CD4-positive, alpha-beta T cell (primary cell): ENCODE measurements at regions of chr10 and their contacts with region 1.

Region 1: DNA sequence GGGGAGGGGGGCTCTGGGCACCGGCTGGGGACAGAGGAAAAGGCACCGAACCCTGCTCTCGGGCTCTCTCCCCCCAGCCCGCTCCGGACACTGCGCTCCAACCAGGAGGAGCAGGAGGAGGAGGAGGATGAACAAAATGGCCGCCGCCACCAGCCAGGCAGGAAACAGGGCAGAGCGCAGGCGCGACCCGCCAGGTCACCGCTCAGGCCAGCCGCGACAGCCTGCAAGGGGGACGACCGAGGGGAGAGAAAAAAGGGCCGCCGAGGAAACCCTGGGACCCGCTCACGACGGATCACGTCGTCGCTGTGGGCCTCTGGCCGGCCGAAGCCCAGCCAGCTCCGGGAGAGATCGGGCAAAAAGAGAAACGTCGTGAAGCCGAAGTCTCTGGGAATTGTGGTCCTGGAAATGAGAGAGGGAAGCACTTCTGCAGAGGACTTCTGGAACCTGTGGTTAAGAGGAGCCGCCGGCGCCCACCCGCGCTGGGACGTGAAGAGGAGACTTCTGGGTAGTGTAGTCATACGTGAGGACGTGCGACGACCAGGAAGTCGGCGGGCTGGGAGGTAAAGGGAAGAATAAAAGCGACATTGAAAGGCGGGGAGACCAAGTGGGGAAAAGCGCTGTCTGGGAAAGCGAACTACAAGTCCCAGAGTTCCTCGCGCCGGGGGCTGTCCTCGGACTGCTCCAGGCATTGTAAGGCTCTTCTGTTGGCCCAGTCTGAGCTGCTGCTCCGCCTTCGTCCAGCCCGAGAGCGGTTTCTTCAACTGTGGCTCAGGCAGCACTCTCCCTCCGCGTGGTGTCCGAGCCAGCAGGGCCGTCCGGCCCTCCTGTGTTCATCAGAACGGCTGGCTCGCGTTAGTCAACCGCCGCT is at the start of gene TIAL1:
- DNase-seq: peak; percentile 82 to 97 (median 90)
- ATAC-seq: peak; percentile 82
- H3K4me3 ChIP-seq: peak within 1 kb of the TSS; percentile 70
- H3K4me3 Mint-ChIP-seq: peak within 1 kb of the TSS; percentile 98
- H3K27ac ChIP-seq: peak within 1 kb of the TSS; percentile 87 to 96
- H3K27ac Mint-ChIP-seq: peak within 1 kb of the TSS; percentile 95
- H3K4me1 ChIP-seq: peaks cover 22% of the 10 kb centered on the region
- H3K4me1 Mint-ChIP-seq: peaks cover 60% of the 10 kb centered on the region
- H3K27me3 ChIP-seq: no peaks in the 10 kb centered on the region
- H3K27me3 Mint-ChIP-seq: no peaks in the 10 kb centered on the region
- CTCF ChIP-seq: no peak
- total RNA-seq, gene TIAL1: 159 to 174 TPM

Region 2: GRCh38 chr10:119080521-119081260 is 516.1 kb before region 1 on chr10 and contains the start of gene EIF3A:
- CTCF ChIA-PET with region 1: no interaction called
- POLR2A ChIA-PET with region 1: no interaction called
- intact Hi-C with region 1: loop called (anchors 5 to 10 kb)
- DNase-seq: peak; percentile 82 to 96 (median 88)
- ATAC-seq: peak; percentile 69
- H3K4me3 ChIP-seq: peak within 1 kb of the TSS; percentile 99
- H3K4me3 Mint-ChIP-seq: peak within 1 kb of the TSS; percentile 100
- H3K27ac ChIP-seq: peak within 1 kb of the TSS; percentile 92 to 96
- H3K27ac Mint-ChIP-seq: peak within 1 kb of the TSS; percentile 99
- H3K4me1 ChIP-seq: peaks cover 33% of the 10 kb centered on the region
- H3K4me1 Mint-ChIP-seq: peaks cover 64% of the 10 kb centered on the region
- H3K27me3 ChIP-seq: no peaks in the 10 kb centered on the region
- H3K27me3 Mint-ChIP-seq: no peaks in the 10 kb centered on the region
- CTCF ChIP-seq: no peak
- total RNA-seq, gene EIF3A: 129 TPM

Region 3: GRCh38 chr10:119445311-119445934 is 151.3 kb before region 1 on chr10:
- CTCF ChIA-PET with region 1: no interaction called
- POLR2A ChIA-PET with region 1: no interaction called
- intact Hi-C with region 1: loop called in 1 of 2 experiments (anchors 5 kb)
- DNase-seq: peak; percentile 75 to 93 (median 82)
- ATAC-seq: peak; percentile 90
- H3K4me3 ChIP-seq: no peak overlapping the region
- H3K4me3 Mint-ChIP-seq: no peak overlapping the region
- H3K27ac ChIP-seq: no peak overlapping the region
- H3K27ac Mint-ChIP-seq: no peak overlapping the region
- H3K4me1 ChIP-seq: peaks cover 9% of the 10 kb centered on the region
- H3K4me1 Mint-ChIP-seq: peaks cover 20% of the 10 kb centered on the region
- H3K27me3 ChIP-seq: no peaks in the 10 kb centered on the region
- H3K27me3 Mint-ChIP-seq: no peaks in the 10 kb centered on the region
- CTCF ChIP-seq: peak; percentile 83

Region 4: DNA sequence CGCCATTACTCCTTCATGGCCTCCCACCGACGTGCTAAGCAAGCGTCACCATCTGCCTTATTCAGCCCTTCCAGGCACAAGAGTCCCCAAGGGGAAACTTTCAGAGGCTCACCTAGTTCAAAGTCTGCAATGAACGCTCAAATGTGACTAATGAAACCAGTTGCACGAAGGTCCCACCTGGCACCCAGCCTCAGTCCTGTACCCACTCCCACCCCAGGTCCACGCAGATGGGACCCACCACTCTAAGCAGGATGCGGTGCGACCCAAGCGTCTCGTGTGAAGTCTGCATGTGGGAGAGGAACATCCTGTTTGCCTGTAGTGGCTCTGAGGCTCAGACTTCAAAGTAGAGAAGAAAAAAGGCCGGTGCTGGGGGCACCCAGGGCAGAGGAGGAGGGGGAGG is 94.6 kb before region 1 on chr10:
- CTCF ChIA-PET with region 1: no interaction called
- POLR2A ChIA-PET with region 1: interaction called, 6 read pairs
- intact Hi-C with region 1: loop called in 1 of 2 experiments (anchors 5 kb)
- DNase-seq: peak; percentile 64 to 96 (median 88)
- ATAC-seq: peak; percentile 84
- H3K4me3 ChIP-seq: peak overlapping the region; percentile 17
- H3K4me3 Mint-ChIP-seq: peak overlapping the region; percentile 80
- H3K27ac ChIP-seq: peak overlapping the region; percentile 78 to 95
- H3K27ac Mint-ChIP-seq: peak overlapping the region; percentile 99
- H3K4me1 ChIP-seq: peaks cover 92% of the 10 kb centered on the region
- H3K4me1 Mint-ChIP-seq: peaks cover 94% of the 10 kb centered on the region
- H3K27me3 ChIP-seq: no peaks in the 10 kb centered on the region
- H3K27me3 Mint-ChIP-seq: no peaks in the 10 kb centered on the region
- CTCF ChIP-seq: no peak

Region 5: GRCh38 chr10:119517235-119518141 is 79.3 kb before region 1 on chr10:
- CTCF ChIA-PET with region 1: no interaction called
- POLR2A ChIA-PET with region 1: interaction called, 3 read pairs
- intact Hi-C with region 1: loop called in 1 of 2 experiments (anchors 5 kb)
- DNase-seq: peak in 10 of 14 experiments; percentile 38 to 80 (median 51)
- ATAC-seq: peak; percentile 22
- H3K4me3 ChIP-seq: peak overlapping the region; percentile 27
- H3K4me3 Mint-ChIP-seq: peak overlapping the region; percentile 86
- H3K27ac ChIP-seq: peak overlapping the region; percentile 71 to 91
- H3K27ac Mint-ChIP-seq: peak overlapping the region; percentile 98
- H3K4me1 ChIP-seq: peaks cover 64% of the 10 kb centered on the region
- H3K4me1 Mint-ChIP-seq: peaks cover 76% of the 10 kb centered on the region
- H3K27me3 ChIP-seq: no peaks in the 10 kb centered on the region
- H3K27me3 Mint-ChIP-seq: no peaks in the 10 kb centered on the region
- CTCF ChIP-seq: no peak

Region 6: GRCh38 chr10:119637631-119638030 is 40.9 kb after region 1 on chr10:
- CTCF ChIA-PET with region 1: no interaction called
- POLR2A ChIA-PET with region 1: no interaction called
- intact Hi-C with region 1: no loop called
- DNase-seq: no peak
- ATAC-seq: no peak
- H3K4me3 ChIP-seq: no peak overlapping the region
- H3K4me3 Mint-ChIP-seq: no peak overlapping the region
- H3K27ac ChIP-seq: no peak overlapping the region
- H3K27ac Mint-ChIP-seq: no peak overlapping the region
- H3K4me1 ChIP-seq: peaks cover 16% of the 10 kb centered on the region
- H3K4me1 Mint-ChIP-seq: peaks cover 13% of the 10 kb centered on the region
- H3K27me3 ChIP-seq: no peaks in the 10 kb centered on the region
- H3K27me3 Mint-ChIP-seq: no peaks in the 10 kb centered on the region
- CTCF ChIP-seq: no peak

Region 7: DNA sequence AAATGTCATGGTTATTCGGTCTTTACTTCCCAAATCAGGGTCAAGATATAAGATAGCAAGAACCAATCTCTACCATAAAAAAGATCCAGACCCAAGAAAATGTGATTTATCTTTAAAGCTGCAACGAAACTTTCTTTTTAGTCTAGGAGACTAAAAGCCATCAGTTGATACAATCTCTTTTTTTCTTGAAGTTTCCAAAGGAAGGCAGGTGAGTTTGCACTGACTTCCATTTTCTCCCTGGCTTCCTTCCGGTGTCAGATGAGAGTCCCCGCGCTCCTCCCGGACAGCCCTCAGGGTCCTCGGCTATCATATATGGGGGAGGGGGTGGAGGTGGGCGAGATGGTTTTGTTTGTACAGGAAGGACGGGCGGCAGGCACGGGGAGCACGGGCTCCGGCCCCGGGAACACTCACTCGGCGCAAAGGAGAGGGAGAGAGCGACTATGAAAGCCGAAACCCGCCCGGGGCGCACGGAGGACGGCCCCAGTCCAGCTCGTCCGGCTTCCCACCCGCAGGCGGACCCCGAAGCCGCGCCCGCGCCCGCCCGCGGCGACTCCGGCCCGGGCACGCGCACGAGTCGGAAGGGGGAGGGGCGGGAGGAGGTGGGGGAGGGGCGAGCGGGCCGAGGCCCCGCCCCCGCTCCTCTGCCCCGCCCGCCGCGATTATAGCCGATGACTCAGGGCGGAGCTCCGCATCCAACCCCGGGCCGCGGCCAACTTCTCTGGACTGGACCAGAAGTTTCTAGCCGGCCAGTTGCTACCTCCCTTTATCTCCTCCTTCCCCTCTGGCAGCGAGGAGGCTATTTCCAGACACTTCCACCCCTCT is 54.1 kb after region 1 on chr10 and contains the start of gene BAG3:
- CTCF ChIA-PET with region 1: no interaction called
- POLR2A ChIA-PET with region 1: interaction called, 20 read pairs
- intact Hi-C with region 1: loop called (anchors 2 kb)
- DNase-seq: peak; percentile 60 to 89 (median 76)
- ATAC-seq: peak; percentile 52
- H3K4me3 ChIP-seq: peak within 1 kb of the TSS; percentile 72
- H3K4me3 Mint-ChIP-seq: peak within 1 kb of the TSS; percentile 100
- H3K27ac ChIP-seq: peak within 1 kb of the TSS; percentile 77 to 88
- H3K27ac Mint-ChIP-seq: peak within 1 kb of the TSS; percentile 99
- H3K4me1 ChIP-seq: peaks cover 27% of the 10 kb centered on the region
- H3K4me1 Mint-ChIP-seq: peaks cover 49% of the 10 kb centered on the region
- H3K27me3 ChIP-seq: no peaks in the 10 kb centered on the region
- H3K27me3 Mint-ChIP-seq: no peaks in the 10 kb centered on the region
- CTCF ChIP-seq: no peak
- total RNA-seq, gene BAG3: 65.1 to 65.8 TPM